AG04449 (cell line): ENCODE measurements at regions of chr6 and their contacts with region 1.

Region 1: DNA sequence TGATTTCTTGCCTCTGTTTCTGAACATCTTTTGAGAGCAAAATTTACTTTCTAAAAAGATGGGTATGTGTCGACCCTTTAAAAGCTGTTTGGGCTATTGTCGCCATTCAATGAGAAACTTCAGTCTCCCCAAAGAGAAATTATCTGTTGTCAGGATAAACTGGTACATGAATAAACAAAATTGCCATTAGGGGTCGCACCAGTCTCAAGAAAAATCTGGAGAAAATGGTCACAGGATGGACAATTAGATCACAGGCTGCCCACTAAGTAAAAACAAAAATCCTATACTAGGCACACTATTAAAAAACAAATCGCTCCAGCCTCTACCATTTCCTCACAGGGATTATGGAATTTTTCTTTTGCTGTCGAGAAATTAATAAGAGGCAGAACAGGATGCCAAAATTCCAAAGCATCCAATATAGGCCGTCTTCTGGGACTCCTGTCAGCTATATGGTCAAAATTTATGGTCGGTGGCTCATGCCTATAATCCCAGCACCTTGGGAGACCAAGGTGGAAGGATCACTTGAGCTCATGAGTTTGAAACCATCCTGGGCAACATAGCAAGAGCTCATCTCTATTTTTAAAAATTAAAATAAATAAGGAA is 5.5 kb upstream of the HLA-E start:
- DNase-seq: no peak
- H3K4me3 ChIP-seq: no peak overlapping the region
- CTCF ChIP-seq: peak; percentile 36

Region 2: GRCh38 chr6:30470968-30471367 is 12.8 kb before region 1 on chr6:
- CTCF ChIA-PET with region 1: interaction called, 10 read pairs
- POLR2A ChIA-PET with region 1: no interaction called
- DNase-seq: no peak
- H3K4me3 ChIP-seq: no peak overlapping the region
- CTCF ChIP-seq: no peak

Region 3: DNA sequence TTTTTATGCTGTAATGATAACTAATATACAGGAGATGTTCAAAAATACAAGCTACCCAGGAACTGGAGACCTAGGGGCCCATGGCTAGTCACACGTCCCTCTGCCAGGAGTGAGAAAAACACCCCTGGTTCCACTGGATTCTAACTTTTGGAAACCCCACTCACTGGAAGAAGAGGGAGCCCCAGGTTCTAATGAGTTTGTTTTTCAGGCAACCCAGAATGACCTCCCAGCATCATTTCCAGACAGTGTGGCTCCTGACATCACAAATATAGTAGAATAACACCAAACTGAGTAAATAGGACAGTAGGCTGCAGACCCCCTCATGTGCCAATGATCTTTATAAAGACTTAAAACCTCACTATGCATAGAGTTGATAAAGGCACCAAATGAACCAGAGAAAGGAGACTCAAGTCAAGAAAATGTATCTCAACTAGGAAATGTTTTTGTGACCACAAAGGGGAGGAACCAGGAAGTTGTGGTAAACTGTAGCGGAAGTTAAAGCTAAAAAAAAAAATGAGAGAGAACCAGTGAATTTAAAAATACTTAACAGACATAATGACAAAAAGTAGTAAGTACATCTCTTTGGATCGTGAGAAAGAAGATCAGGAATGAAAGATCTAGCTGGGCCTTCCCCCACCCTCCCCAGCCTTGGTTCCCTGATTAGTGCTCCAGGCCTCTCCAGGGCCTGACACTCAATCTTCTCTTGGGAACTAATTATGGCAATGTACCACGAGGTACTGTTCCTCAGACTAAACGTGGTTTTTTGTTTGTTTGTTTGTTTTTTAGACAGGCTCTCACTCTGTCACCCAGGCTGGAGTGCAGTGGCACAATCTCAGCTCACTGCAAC is 25.3 kb after region 1 on chr6:
- CTCF ChIA-PET with region 1: interaction called, 35 read pairs
- POLR2A ChIA-PET with region 1: no interaction called
- DNase-seq: no peak
- H3K4me3 ChIP-seq: no peak overlapping the region
- CTCF ChIP-seq: no peak

Region 4: GRCh38 chr6:30533460-30534294 is 49.9 kb after region 1 on chr6:
- CTCF ChIA-PET with region 1: interaction called, 788 read pairs
- POLR2A ChIA-PET with region 1: interaction called, 5 read pairs
- DNase-seq: no peak
- H3K4me3 ChIP-seq: no peak overlapping the region
- CTCF ChIP-seq: no peak

Region 5: DNA sequence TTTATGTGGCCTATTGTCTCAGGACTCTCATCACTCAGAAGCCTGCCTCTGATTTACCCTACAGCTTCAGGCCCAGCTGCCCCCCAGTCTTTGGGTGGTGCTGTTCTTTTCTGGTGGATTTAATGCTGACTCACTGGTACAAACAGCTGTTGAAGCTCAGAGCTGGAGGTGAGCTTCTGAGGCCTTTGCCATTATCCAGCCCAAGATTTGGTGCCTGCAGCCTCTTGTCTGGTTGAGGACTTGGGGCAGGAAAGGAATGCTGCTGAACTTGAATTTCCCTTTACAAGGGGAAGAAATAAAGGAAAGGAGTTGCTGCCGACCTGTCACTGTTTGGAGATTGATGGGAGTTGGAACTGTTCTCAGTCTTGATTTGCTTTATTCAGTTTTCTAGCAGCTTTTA is 107.2 kb after region 1 on chr6:
- CTCF ChIA-PET with region 1: interaction called, 29 read pairs
- POLR2A ChIA-PET with region 1: no interaction called
- DNase-seq: no peak
- H3K4me3 ChIP-seq: no peak overlapping the region
- CTCF ChIP-seq: no peak

Region 6: GRCh38 chr6:30672445-30673253 is 188.9 kb after region 1 on chr6 and contains the start of gene DHX16:
- CTCF ChIA-PET with region 1: interaction called, 12 read pairs
- POLR2A ChIA-PET with region 1: no interaction called
- DNase-seq: peak; percentile 90
- H3K4me3 ChIP-seq: peak within 1 kb of the TSS; percentile 97
- CTCF ChIP-seq: peak; percentile 61